Posterior vena cava (tissue), 2 donors: ENCODE measurements at regions of chr20 and their contacts with region 1.

Region 1: GRCh38 chr20:62500237-62500864 is 24.6 kb upstream of the GATA5 start:
- DNase-seq: peak; percentile 93

Region 2: DNA sequence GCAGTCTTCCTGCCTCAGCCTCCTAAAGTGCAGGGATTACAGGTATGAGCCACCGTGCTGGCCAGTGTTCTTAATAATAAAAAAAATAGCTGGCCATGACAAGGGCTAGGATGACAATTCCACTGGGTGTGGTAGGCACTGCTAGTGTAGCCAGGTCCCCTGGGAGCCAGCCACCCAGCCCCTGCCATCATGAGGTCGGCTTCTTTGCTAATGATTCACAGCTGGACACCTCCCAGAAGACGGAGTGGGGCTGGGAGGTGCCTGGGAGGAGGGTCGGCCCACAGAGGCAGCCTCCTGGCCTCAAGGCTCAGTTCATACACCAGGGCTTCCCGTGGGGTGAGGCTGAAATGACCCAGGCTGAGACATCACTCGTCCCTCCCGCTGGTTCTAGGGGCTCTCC is 665.0 kb before region 1 on chr20:
- intact Hi-C with region 1: loop called in 1 of 2 experiments (anchors 10 kb)
- DNase-seq: no peak

Region 3: DNA sequence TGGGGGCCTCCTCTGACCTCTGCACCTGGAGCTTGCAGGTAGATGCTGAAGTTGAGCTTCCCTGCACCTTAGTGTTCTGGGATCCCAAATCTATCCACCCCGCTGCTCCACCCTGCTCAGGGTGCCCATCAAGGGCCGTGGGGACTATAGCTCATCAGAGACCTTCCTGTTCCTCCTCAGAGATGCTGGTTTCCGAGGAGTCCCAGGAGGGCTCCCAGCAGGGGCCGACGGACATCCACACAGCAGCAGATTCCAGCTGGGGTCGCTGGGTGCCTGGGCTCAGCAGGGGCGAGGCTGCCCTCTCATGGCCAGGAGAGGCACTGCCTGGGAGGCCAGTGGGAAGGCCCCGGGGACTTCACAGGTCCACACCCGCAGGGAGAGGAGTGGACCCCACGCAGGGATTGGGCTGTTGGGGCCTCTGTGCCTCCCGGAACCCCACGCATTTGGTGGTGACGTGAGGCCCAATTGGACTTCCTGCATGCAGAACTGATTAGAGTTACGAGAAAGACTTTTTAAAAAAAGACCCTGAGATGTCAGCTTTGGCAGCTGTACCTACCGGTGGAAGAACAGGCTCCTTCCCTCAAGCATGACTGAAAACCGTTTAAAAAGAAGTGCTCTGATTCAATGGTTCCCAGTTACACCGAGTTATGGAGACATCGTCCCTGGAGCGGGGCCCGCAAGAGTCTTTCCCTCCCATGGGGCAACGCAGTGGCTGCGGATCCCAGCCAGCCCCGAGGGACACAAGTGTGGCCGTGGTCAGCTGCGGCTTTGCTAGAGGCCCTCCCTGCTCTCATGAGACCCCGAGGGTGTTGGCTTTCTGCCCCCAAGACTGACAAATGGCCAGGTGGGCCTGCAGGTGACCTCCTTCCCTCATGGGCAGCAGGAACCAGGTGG is 116.6 kb after region 1 on chr20:
- intact Hi-C with region 1: loop called in 1 of 2 experiments (anchors 2 kb)
- DNase-seq: peak; percentile 92

Region 4: GRCh38 chr20:62776692-62777527 is 276.6 kb after region 1 on chr20:
- intact Hi-C with region 1: loop called in 1 of 2 experiments (anchors 10 kb)
- DNase-seq: no peak

Region 5: DNA sequence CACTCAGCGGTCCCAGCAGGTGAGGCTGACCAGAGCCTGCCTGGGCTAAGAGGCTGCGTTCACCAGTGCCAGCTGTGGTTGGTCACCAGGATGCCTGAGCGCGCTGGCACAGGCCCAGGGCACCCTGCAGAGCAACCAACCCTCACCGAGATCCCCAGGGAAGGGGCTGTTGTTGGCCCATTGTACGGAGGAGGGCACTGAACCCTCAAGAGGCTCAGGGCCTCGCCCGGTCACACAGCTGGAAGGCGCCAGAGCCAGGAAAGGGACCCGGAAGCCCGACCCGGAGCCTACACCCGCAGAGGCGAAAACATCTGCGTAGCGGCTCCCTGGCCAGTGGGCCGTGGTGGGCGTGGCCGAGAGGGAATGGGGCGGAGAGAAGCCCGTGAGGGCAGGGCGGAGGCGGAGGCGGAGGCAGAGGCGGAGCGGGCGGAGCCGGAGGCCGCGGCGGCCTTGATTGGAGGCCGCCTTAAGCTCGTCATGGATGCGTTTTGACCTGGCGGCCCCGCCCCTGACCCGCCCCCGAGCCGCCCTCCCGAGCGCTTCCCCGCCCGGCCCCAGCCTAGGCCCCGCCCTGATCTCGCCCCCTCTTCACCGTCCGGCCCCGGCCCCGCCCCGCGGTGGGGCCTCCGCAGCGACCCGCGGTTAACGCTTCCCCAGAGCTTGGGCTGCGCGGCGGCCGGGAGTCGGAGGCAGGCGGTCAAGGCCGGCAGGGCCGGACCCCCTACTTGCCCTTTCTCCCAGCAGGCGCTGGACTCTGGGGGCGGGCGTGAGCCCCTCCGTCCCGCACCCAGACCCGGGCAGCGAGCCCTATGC is 293.8 kb after region 1 on chr20:
- intact Hi-C with region 1: loop called in 1 of 2 experiments (anchors 5 kb)
- DNase-seq: peak; percentile 99